Heart right ventricle (tissue), 16 donors: ENCODE measurements at regions of chr6 and their contacts with region 1.

Region 1: GRCh38 chr6:50236164-50236563 is 186.4 kb upstream of the DEFB112 start:
- DNase-seq: no peak
- ATAC-seq: no peak
- H3K4me3 ChIP-seq: no peak overlapping the region
- H3K27ac ChIP-seq: no peak overlapping the region
- H3K4me1 ChIP-seq: no peaks in the 10 kb centered on the region
- H3K27me3 ChIP-seq: no peaks in the 10 kb centered on the region
- CTCF ChIP-seq: no peak

Region 2: DNA sequence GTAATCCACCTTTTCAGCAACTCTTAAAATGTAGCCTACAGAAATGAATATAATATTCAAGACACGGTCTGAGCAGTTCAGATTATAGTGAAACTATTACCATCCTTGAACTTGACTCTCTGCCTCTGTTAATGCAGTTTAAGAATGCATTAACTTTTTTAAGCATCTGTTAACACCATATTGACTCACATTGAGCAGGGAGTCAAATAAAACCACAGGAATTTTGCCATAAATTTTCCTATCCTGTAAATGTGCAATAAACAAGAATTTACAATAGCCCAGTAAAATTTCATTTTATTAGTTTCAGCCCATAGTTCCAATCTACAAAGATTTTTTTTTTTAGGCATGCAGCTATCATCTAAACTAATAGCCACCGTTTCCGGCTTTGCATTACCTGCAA is 52.7 kb after region 1 on chr6:
- intact Hi-C with region 1: loop called in 1 of 10 experiments (anchors 10 kb)
- DNase-seq: no peak
- ATAC-seq: no peak
- H3K4me3 ChIP-seq: no peak overlapping the region
- H3K27ac ChIP-seq: no peak overlapping the region
- H3K4me1 ChIP-seq: no peaks in the 10 kb centered on the region
- H3K27me3 ChIP-seq: no peaks in the 10 kb centered on the region
- CTCF ChIP-seq: no peak

Region 3: DNA sequence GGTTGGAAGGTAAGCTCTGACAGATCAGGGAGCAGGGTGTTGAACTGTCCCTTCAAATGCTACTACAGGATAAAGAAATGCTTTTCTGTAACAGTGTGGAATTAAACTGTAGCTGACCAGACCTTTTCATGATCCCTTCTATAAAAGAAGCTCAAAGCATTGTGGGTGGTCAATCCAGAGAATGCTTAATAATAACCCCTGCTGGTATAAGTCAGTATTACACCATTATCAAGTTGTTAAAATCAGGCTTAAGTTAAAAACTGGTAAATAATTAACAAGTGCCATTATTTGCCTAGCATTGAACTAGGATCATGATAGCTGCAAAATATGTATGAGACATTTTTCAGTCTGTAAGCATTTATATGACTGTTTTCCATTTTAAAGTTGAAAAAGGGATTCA is 1382.4 kb after region 1 on chr6:
- intact Hi-C with region 1: no loop called
- DNase-seq: no peak
- ATAC-seq: no peak
- H3K4me3 ChIP-seq: no peak overlapping the region
- H3K27ac ChIP-seq: no peak overlapping the region
- H3K4me1 ChIP-seq: no peaks in the 10 kb centered on the region
- H3K27me3 ChIP-seq: no peaks in the 10 kb centered on the region
- CTCF ChIP-seq: peak in 6 of 9 donors; percentile 8 to 56 (median 29)